ENCODE measurements at regions of chr9 and their contacts with region 1.

Region 1: DNA sequence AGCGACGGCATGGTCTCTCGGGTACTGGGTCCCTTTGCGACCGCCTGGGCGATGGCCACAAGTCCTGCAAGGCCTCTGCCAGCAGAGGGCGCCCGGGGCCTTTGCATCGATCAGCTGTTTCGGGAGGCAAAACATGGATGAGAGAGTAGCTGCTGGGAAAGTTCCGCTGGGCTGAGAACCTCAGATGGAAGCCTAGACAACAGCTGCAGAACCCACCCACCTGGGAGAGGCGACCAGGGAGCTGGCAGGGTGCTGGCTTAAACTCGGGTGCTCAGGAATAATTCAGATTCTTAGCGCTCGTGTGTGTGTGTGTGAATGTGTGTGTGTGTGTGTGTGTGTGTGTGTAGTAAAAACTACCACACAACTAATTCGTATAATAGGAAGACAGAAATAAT is 50.0 kb downstream of the TRIM32 start:
- DNase-seq: peak; percentile 88

Region 2: GRCh38 chr9:116757030-116757429 is 19.9 kb after region 1 on chr9:
- CTCF ChIA-PET with region 1: no interaction called
- POLR2A ChIA-PET with region 1: no interaction called
- DNase-seq: no peak

Region 3: DNA sequence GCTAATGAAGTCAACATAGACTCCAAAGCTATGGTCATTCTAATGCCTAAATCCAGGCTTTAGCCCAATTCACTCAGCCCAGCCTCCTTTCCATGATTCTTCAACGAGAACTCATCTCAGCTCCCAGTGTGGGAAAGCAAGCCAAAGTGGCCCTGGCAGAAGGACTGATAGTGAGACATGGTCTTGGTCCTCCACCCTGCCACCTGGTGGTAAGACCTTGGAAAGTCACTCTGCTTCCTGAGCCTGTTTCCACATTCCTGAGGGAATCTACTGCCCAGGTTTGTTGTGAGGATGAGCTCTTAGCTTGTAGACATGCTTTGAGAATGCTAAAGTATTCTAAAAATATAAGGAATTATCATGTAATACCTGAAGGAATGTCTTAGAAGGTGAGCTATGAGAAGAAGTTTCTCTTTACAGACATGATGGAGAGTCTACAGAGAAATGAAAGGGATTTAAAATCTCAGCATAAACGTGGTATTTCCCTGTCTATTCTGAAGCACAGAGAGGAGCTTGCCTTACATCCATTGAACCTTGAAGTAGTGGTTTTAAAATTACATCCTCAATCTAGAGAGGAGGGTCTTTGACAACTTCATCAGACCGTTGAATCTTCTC is 123.5 kb after region 1 on chr9:
- CTCF ChIA-PET with region 1: interaction called, 79 read pairs
- POLR2A ChIA-PET with region 1: no interaction called
- DNase-seq: peak; percentile 71